Posterior cingulate gyrus (tissue), 11 donors: ENCODE measurements at regions of chr9 and their contacts with region 1.

Region 1: DNA sequence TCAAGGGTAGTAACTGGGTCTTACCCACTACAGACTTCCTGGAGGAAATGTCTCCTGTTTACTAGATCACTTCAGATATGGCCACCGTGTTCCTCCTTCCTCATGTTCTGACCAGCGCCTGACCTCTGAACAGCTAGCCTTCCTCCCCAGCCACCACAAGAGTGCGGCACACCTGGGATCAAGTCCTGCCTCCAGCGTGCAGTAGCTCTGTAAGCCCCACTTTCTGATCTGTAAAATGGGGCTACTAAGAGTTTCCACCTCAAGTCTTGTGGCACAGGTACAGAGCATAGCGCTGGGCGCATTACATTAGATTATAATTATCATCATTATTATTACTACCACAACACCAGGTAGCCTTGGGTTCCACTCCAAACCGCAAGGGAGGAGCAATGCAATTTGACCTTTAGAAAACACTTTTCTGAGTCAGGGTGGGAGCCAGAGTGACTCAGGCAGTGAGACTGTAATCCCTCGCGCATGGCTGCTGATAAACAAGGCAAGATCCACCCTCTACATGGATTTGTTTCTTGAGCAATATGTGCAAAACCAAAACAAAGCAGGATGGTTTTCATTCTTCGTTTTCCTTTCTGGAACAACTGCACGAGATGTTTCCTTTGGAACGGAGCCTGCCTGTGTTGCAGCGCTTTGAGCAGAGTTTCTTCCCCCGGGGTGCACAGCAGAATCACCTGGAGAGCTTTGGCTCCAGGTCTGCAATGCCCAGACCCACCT is 65.0 kb upstream of the ANGPTL2 start:
- DNase-seq: peak in 3 of 10 donors; percentile 3 to 62 (median 39)

Region 2: DNA sequence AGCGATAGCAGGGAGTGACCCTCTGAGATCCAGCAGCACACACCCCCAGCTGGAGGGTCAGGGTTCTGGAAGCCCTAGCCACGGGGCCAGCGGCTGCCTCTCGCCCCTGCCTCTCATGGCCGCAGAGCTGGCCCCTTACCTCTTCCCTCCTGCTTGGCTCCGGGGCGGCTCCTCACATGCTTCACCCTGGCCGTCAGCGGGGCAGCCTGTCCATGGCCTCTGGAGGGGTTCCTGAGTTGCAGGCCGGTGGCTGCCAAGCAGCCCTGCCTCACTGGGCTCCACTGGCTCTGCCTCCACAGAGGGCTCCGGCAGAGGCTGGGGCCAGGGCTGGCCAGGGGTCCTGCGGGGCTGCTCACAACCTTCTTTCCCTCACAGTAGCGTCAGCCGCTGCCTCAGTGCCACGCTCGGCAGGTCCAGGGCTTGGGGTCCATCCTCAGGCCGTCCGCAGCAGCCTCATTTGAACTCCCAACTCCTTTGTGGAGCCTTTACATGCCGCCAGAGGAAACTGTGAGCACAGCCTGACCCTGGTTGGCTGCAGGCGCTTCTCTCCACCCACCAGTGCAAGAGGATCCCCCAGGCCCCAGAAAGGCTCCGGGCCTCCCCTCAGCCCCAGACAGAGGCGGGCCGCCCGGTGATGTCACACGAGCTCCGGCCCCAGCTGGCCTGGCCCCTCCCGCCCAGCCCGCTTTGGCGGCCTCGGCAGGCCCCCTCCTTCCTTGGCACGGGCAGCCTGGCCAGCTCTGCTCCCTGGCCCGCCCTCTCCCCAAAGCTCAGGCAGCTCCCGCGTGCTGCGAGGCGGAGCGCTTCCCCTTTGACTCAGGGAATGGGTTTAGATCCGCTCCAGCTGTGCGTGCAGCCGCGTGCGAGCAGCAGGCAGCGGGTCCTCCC is 65.0 kb before region 1 on chr9 and contains the start of gene ANGPTL2:
- intact Hi-C with region 1: loop called (anchors 10 kb)
- DNase-seq: peak; percentile 79 to 99 (median 88)

Region 3: GRCh38 chr9:127159325-127159801 is 28.0 kb before region 1 on chr9:
- intact Hi-C with region 1: no loop called
- DNase-seq: peak; percentile 48 to 95 (median 69)

Region 4: DNA sequence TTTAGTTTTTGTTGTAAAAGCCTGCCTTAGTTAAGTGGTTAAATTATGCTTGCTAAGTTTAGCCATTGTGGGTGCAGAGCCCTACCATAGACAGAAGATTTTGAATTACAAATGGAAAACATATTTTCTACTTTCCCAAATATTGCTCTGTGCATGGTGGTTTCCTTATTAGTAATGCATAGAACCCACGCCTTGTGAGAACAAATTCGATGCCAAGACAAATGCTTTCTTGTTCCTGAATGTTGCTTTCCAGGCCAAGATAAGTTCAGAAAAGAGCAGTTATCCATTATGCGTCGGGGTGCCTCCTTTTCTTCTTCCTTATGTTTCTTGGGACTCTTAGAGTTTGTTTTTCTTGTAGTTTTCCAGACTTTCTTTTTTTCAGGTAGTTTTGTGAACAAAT is 46.2 kb after region 1 on chr9:
- intact Hi-C with region 1: no loop called
- DNase-seq: no peak